Caco-2 (cell line): ENCODE measurements at regions of chr12 and their contacts with region 1.

Region 1: GRCh38 chr12:25386831-25387731 is 136.4 kb upstream of the KRAS start:
- DNase-seq: peak; percentile 85 to 92
- H3K4me3 ChIP-seq: peak overlapping the region; percentile 67
- H3K4me3 Mint-ChIP-seq: peak overlapping the region; percentile 97
- H3K27ac Mint-ChIP-seq: peak overlapping the region; percentile 99
- H3K4me1 ChIP-seq: peaks cover 11% of the 10 kb centered on the region
- H3K4me1 Mint-ChIP-seq: peaks cover 33% of the 10 kb centered on the region
- H3K27me3 ChIP-seq: no peaks in the 10 kb centered on the region
- H3K27me3 Mint-ChIP-seq: no peaks in the 10 kb centered on the region
- CTCF ChIP-seq: peak; percentile 92 to 94

Region 2: DNA sequence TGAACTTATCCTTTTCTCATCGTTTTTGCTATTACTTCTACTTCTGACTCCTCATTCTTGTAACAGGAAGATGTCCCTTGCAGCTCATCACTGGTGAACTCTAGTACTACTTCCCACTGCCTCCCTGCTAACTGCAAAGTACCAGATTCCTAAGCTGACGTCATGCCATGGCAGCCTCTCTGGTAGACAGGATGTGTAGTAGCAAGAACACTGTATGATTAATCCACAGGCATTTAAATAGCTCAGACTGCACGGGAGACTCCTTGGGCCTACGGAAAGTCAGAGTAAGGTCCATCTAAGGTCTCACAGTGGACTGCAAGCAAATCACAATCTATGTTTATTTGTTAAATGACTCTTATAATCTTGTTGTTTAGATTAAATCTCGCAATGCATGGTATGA is 235.6 kb before region 1 on chr12:
- CTCF ChIA-PET with region 1: no interaction called
- POLR2A ChIA-PET with region 1: no interaction called
- intact Hi-C with region 1: loop called (anchors 1 kb)
- DNase-seq: no peak
- H3K4me3 ChIP-seq: no peak overlapping the region
- H3K4me3 Mint-ChIP-seq: no peak overlapping the region
- H3K27ac Mint-ChIP-seq: no peak overlapping the region
- H3K4me1 ChIP-seq: no peaks in the 10 kb centered on the region
- H3K4me1 Mint-ChIP-seq: peaks cover 6% of the 10 kb centered on the region
- H3K27me3 ChIP-seq: no peaks in the 10 kb centered on the region
- H3K27me3 Mint-ChIP-seq: no peaks in the 10 kb centered on the region
- CTCF ChIP-seq: no peak

Region 3: DNA sequence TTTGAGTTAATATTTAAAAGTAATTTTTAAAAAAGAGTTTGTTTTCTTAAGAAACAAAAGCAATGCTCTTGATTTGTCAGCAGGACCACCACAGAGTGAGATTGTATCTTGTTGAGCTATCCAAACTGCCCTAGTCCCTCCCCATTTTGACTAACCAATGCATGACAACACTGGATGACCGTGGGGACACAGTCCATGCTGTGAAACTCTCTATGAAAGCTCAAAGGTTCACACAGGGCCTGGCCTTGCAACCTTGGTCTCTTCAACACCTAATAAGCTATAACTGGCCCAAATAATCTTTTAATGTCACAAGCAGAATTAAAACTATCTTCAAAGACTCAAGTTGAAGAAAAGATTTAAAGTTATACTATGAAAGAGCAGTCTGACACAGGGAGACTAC is 178.5 kb before region 1 on chr12:
- CTCF ChIA-PET with region 1: interaction called, 7 read pairs
- POLR2A ChIA-PET with region 1: interaction called, 4 read pairs
- intact Hi-C with region 1: loop called (anchors 1 kb)
- DNase-seq: no peak
- H3K4me3 ChIP-seq: no peak overlapping the region
- H3K4me3 Mint-ChIP-seq: no peak overlapping the region
- H3K27ac Mint-ChIP-seq: no peak overlapping the region
- H3K4me1 ChIP-seq: no peaks in the 10 kb centered on the region
- H3K4me1 Mint-ChIP-seq: peaks cover 7% of the 10 kb centered on the region
- H3K27me3 ChIP-seq: no peaks in the 10 kb centered on the region
- H3K27me3 Mint-ChIP-seq: no peaks in the 10 kb centered on the region
- CTCF ChIP-seq: no peak

Region 4: DNA sequence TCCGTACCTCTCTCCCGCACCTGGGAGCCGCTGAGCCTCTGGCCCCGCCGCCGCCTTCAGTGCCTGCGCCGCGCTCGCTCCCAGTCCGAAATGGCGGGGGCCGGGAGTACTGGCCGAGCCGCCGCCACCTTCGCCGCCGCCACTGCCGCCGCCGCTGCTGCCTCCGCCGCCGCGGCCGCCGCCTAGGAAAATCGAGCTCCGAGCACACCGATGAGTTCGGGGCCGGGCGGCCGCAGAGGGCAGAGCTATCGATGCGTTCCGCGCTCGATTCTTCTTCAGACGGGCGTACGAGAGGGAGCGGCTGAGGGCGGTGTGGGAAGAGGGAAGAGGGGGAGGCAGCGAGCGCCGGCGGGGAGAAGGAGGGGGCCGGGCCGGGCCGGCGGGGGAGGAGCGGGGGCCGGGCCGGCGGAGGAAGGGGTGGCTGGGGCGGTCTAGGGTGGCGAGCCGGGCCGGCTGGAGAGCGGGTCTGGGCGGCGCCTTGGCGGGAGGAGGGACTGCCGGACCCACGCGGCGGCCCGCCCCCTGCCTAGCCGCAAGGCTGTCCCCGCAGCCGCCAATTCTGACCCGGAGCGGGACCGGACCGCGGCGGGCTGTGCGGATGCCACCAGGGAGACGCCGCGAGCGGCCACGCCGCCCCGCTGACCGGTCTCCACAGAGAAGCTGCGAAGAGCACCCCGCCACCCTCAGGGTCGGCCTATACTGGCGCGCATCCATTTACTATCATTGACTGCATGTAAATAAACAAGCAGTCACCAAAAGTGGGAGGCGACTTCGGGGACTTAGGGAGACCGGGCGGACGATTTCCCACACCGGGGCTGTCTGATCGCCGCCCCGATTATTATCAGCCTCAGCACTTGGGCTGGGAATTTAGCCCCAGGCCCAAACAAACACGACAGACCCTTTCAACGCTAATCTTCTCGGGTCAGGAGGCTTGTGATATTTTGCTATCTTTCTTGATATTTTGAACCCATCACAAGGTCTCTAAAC is 136.0 kb before region 1 on chr12 and contains the start of gene KRAS:
- CTCF ChIA-PET with region 1: interaction called, 7 read pairs
- POLR2A ChIA-PET with region 1: interaction called, 9 read pairs
- intact Hi-C with region 1: loop called (anchors 1 kb)
- DNase-seq: peak; percentile 99
- H3K4me3 ChIP-seq: peak within 1 kb of the TSS; percentile 78
- H3K4me3 Mint-ChIP-seq: peak within 1 kb of the TSS; percentile 98
- H3K27ac Mint-ChIP-seq: peak within 1 kb of the TSS; percentile 79
- H3K4me1 ChIP-seq: peaks cover 47% of the 10 kb centered on the region
- H3K4me1 Mint-ChIP-seq: peaks cover 63% of the 10 kb centered on the region
- H3K27me3 ChIP-seq: no peaks in the 10 kb centered on the region
- H3K27me3 Mint-ChIP-seq: no peaks in the 10 kb centered on the region
- CTCF ChIP-seq: no peak
- total RNA-seq, gene KRAS: 162 and 179 TPM in 2 replicates

Region 5: GRCh38 chr12:25347716-25348271 is 39.3 kb before region 1 on chr12:
- CTCF ChIA-PET with region 1: interaction called, 10 read pairs
- POLR2A ChIA-PET with region 1: interaction called, 3 read pairs
- intact Hi-C with region 1: no loop called
- DNase-seq: peak; percentile 88 to 89
- H3K4me3 ChIP-seq: no peak overlapping the region
- H3K4me3 Mint-ChIP-seq: peak overlapping the region; percentile 19
- H3K27ac Mint-ChIP-seq: peak overlapping the region; percentile 78
- H3K4me1 ChIP-seq: peaks cover 29% of the 10 kb centered on the region
- H3K4me1 Mint-ChIP-seq: peaks cover 12% of the 10 kb centered on the region
- H3K27me3 ChIP-seq: no peaks in the 10 kb centered on the region
- H3K27me3 Mint-ChIP-seq: no peaks in the 10 kb centered on the region
- CTCF ChIP-seq: no peak

Region 6: GRCh38 chr12:25682421-25682820 is 295.3 kb after region 1 on chr12:
- CTCF ChIA-PET with region 1: no interaction called
- POLR2A ChIA-PET with region 1: no interaction called
- intact Hi-C with region 1: no loop called
- DNase-seq: no peak
- H3K4me3 ChIP-seq: no peak overlapping the region
- H3K4me3 Mint-ChIP-seq: no peak overlapping the region
- H3K27ac Mint-ChIP-seq: no peak overlapping the region
- H3K4me1 ChIP-seq: no peaks in the 10 kb centered on the region; the same call in 1 of the 2 replicates
- H3K4me1 Mint-ChIP-seq: peaks cover under 1% of the 10 kb centered on the region
- H3K27me3 ChIP-seq: no peaks in the 10 kb centered on the region
- H3K27me3 Mint-ChIP-seq: no peaks in the 10 kb centered on the region
- CTCF ChIP-seq: no peak